GM13976 (cell line): ENCODE measurements at regions of chr9 and their contacts with region 1.

Region 1: GRCh38 chr9:92634712-92635605 is 35.0 kb downstream of the IPPK start:
- DNase-seq: peak; percentile 88
- CTCF ChIP-seq: peak; percentile 67

Region 2: DNA sequence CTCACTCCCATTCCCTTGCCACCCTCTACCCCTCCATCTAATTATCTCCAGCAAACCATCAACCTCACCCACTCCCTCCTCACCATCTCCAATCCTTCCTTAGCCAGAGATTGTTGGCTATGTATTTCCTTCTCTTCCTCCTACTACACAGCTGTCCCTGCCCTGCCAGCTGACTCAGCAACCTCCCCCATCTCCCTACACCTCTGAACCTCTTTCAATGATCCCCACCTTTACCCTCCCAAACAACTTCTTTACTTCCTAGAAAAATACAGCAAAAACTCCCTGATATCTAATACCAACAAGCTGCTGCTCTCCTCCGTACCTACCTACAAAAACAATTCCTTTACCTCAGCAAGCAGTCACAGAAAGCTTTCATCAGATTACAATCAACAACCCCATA is 557.1 kb before region 1 on chr9:
- in situ Hi-C with region 1: no loop called
- DNase-seq: no peak
- CTCF ChIP-seq: no peak

Region 3: GRCh38 chr9:92332577-92333281 is 302.2 kb before region 1 on chr9:
- in situ Hi-C with region 1: loop called (anchors 10 kb)
- DNase-seq: no peak
- CTCF ChIP-seq: no peak

Region 4: GRCh38 chr9:93095205-93096130 is 460.5 kb after region 1 on chr9:
- in situ Hi-C with region 1: no loop called
- DNase-seq: peak; percentile 100
- CTCF ChIP-seq: no peak